ENCODE measurements at regions of chr9 and their contacts with region 1.

Region 1: DNA sequence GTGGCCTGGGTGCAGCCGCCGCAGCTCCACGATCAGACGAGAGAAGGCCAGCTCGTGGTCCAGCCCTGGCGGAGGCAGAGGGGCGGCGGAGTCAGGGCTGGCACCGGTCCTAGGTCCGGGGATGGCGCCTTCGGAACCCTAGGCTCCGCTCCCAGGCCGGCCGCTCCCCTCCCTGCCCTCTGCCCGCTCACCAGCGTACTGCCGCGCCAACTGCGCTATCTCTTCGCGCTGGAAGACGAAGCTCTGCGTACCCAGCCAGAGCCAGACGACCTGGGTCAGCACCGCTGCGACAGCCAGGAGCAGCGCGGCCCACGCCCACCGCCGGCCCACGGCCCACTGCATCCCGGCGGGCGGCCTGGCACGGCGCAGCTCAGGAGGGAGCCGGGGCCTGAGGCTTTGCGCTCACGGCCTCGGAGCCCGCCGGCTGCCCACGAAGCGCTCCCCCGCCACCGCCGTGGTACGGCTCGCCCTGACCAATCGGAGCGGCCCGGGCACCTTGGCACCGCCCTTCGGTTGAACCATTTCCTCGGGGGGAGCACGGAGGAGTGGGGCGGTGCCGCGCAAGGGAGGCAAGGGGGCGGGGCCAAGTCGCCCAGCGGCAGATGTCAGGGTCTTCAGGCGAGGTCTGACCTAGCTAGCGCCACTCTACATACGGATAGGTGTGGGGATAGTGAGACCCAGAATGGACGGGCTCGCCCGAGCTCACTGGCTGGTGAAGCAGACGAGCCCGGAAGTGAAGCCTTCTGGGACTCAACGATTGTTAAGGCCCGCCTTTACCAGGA is at the start of gene SIGMAR1:
- DNase-seq: peak; percentile 91 to 97 (median 96)
- H3K4me3 ChIP-seq: peak within 1 kb of the TSS; percentile 40 to 78 (median 71)
- H3K27ac ChIP-seq: peak within 1 kb of the TSS in 1 of 2 experiments; percentile 73
- H3K4me1 ChIP-seq: peaks cover 2 to 24% (median 21%) of the 10 kb centered on the region in 4 experiments
- H3K27me3 ChIP-seq: no peaks in the 10 kb centered on the region

Region 2: DNA sequence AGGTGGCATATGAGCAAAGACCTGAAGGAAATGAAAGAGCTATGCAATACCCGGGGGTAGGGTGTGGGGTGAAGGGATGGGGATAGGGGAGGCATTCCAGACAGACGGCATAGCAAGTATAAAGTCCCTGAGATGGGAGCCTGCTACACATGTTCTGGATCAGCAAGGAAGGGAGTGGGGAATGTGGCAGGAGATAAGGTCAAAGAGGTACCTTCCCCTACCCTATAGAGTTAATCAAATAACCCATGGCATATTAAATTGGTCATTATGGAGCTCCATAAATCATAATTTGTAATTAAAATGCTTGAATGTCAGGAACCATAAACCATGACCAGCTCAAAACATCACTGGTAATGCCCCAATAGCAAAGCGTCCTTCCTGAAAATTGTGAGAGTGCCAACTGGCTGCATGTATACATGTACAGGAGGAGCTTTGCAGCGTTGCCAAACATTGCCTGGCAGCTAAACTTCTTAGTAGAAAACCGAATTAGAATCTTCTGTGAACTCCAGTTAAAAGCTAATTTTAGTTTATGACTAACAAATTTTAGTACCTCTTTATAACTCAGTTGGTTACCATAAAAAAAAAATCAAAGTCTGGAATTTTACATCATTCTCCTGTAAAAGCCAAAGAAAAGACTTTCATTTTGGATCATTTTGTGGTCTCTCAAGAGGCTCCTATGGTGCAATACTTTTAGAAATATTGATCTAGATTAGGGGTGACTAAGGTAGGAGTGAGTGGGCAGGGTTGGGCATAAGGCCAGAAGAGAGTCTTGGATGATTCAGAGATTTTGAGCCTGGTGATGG is 174.2 kb before region 1 on chr9:
- CTCF ChIA-PET with region 1: no interaction called
- POLR2A ChIA-PET with region 1: no interaction called
- DNase-seq: peak; percentile 14 to 46 (median 33)
- H3K4me3 ChIP-seq: no peak overlapping the region
- H3K27ac ChIP-seq: no peak overlapping the region
- H3K4me1 ChIP-seq: peaks cover 0 to 16% (median 6%) of the 10 kb centered on the region in 4 experiments
- H3K27me3 ChIP-seq: peaks cover 0 to 10% (median 2%) of the 10 kb centered on the region in 5 experiments

Region 3: GRCh38 chr9:34611829-34612630 is 25.5 kb before region 1 on chr9 and contains the start of gene RPP25L:
- CTCF ChIA-PET with region 1: interaction called, 293 read pairs
- POLR2A ChIA-PET with region 1: interaction called, 3 read pairs
- DNase-seq: peak; percentile 76 to 83 (median 79)
- H3K4me3 ChIP-seq: peak within 1 kb of the TSS; percentile 62 to 93 (median 77)
- H3K27ac ChIP-seq: peak within 1 kb of the TSS; percentile 72 to 87
- H3K4me1 ChIP-seq: peaks cover 1 to 26% (median 20%) of the 10 kb centered on the region in 4 experiments
- H3K27me3 ChIP-seq: peaks cover 0 to 2% (median 0%) of the 10 kb centered on the region in 5 experiments

Region 4: DNA sequence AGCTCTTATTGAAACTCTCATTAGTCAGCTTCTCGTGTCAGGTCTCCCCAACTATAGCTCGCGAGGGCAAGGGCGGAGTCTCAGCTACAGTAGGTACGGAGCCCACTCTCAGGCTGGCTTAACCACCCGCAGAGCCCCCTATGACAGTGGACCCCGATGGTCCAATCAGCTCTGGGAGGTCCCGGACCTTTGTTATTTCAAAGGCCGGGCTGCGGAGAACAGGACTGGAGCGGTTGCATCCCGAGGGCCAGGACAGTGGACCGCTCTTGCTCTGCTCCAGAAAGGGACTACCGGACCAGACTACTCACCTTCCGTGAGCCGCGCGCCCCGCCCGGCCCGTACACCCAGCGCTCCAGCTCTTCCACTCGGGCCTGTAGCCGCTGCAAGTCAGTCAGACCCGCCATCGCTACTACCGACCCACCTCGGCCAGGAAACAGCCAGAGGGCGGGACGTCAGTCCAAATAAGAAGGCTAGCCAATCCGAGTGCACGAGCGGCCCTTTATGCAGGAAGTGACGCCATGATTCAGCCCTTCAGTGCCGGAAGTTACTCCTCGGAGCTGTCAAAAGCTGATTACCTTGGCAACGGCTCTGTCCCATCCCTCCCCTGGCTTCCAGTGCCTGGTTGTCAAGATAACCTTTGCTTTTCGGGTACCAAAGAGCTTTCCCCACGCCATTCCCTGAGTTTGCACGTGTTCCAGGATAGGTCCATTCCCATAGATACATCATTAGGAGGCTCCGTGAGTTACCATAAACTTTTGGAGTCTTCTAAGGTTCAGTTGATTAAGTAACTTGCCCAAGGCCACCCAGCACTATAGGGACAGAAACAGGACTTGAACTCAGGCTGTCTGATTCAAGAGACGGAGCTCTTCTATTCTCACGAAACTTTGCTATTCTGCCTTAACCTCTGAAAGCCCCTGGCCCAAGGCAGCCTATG is 17.2 kb before region 1 on chr9 and contains the start of gene DCTN3:
- CTCF ChIA-PET with region 1: interaction called, 293 read pairs
- POLR2A ChIA-PET with region 1: interaction called, 4 read pairs
- DNase-seq: peak; percentile 96 to 98 (median 97)
- H3K4me3 ChIP-seq: peak within 1 kb of the TSS; percentile 60 to 93 (median 83)
- H3K27ac ChIP-seq: peak within 1 kb of the TSS; percentile 56 to 78
- H3K4me1 ChIP-seq: peaks cover 5 to 29% (median 10%) of the 10 kb centered on the region in 4 experiments
- H3K27me3 ChIP-seq: peaks cover 0 to 44% (median 20%) of the 10 kb centered on the region in 5 experiments

Region 5: DNA sequence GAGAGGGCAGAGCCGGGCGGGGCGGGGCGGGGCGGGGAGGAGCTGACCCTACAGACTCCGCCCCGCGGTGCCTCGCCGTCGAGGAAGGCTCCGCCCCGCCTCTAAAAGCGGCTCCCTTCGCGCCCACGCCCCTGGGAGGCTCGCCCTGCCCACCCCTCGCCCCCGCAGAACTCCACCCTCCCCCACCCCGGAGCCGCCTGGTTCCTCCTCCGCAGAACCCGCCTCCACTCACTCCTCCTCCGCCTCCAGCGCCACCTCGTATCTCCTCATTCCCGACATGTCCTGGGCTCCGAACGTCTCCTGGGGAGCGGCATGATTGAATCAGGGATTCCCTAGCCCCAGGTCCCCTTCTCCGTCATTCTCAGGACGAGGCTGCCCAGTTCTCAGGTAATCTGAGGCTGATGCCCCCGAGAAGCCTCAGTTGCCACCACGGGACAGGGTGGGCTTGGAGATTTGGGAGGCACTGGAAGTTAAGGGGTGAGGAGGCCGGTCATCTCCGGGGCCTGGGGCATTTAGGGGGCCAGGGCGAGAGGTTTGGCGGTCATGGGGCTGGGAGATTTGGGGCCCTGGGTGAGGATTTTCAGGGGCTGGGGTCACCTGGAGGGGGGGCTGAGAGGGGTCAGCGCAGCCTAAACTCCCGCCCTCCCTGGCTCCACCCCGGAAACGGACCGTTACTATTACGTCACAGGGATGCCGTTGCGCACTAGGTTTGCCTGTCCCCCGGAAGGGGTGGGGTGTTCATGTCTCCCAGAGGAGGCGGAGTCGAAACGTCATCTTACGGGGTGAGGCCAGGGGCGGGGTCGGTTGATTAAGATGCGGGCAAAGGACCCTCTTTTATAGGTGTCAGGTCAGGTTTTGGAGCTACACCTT is 28.1 kb after region 1 on chr9:
- CTCF ChIA-PET with region 1: interaction called, 96 read pairs
- POLR2A ChIA-PET with region 1: no interaction called
- DNase-seq: peak; percentile 90 to 94 (median 93)
- H3K4me3 ChIP-seq: peak overlapping the region; percentile 52 to 90 (median 73)
- H3K27ac ChIP-seq: peak overlapping the region; percentile 74 to 89
- H3K4me1 ChIP-seq: peaks cover 0 to 18% (median 15%) of the 10 kb centered on the region in 4 experiments
- H3K27me3 ChIP-seq: peaks cover 0 to 2% (median 0%) of the 10 kb centered on the region in 5 experiments

Region 6: GRCh38 chr9:34717996-34718614 is 80.6 kb after region 1 on chr9:
- CTCF ChIA-PET with region 1: no interaction called
- POLR2A ChIA-PET with region 1: no interaction called
- DNase-seq: no peak
- H3K4me3 ChIP-seq: no peak overlapping the region
- H3K27ac ChIP-seq: no peak overlapping the region
- H3K4me1 ChIP-seq: no peaks in the 10 kb centered on the region
- H3K27me3 ChIP-seq: peaks cover 0 to 9% (median 5%) of the 10 kb centered on the region in 5 experiments

Measured in common myeloid progenitor, CD34-positive (primary cell).